ENCODE measurements at regions of chr1 and their contacts with region 1.

Region 1: GRCh38 chr1:226121587-226122400 is 59.3 kb downstream of the H3-3A start:
- DNase-seq: peak; percentile 44 to 86 (median 75)
- ATAC-seq: peak; percentile 59
- H3K4me3 ChIP-seq: peak overlapping the region; percentile 48 to 61
- H3K4me3 Mint-ChIP-seq: peak overlapping the region; percentile 83
- H3K27ac ChIP-seq: peak overlapping the region; percentile 57 to 70
- H3K27ac Mint-ChIP-seq: peak overlapping the region; percentile 71
- H3K4me1 ChIP-seq: peaks cover 23% of the 10 kb centered on the region
- H3K4me1 Mint-ChIP-seq: peaks cover 26% of the 10 kb centered on the region
- H3K27me3 ChIP-seq: no peaks in the 10 kb centered on the region
- H3K27me3 Mint-ChIP-seq: no peaks in the 10 kb centered on the region
- CTCF ChIP-seq: peak; percentile 82

Region 2: GRCh38 chr1:225474986-225475820 is 646.6 kb before region 1 on chr1:
- CTCF ChIA-PET with region 1: interaction called, 6 read pairs
- POLR2A ChIA-PET with region 1: no interaction called
- intact Hi-C with region 1: loop called (anchors 2 to 5 kb)
- DNase-seq: peak; percentile 44 to 90 (median 70)
- ATAC-seq: peak; percentile 86
- H3K4me3 ChIP-seq: no peak overlapping the region
- H3K4me3 Mint-ChIP-seq: no peak overlapping the region
- H3K27ac ChIP-seq: no peak overlapping the region
- H3K27ac Mint-ChIP-seq: no peak overlapping the region
- H3K4me1 ChIP-seq: peaks cover 53% of the 10 kb centered on the region
- H3K4me1 Mint-ChIP-seq: peaks cover 48% of the 10 kb centered on the region
- H3K27me3 ChIP-seq: no peaks in the 10 kb centered on the region
- H3K27me3 Mint-ChIP-seq: no peaks in the 10 kb centered on the region
- CTCF ChIP-seq: peak; percentile 100

Region 3: DNA sequence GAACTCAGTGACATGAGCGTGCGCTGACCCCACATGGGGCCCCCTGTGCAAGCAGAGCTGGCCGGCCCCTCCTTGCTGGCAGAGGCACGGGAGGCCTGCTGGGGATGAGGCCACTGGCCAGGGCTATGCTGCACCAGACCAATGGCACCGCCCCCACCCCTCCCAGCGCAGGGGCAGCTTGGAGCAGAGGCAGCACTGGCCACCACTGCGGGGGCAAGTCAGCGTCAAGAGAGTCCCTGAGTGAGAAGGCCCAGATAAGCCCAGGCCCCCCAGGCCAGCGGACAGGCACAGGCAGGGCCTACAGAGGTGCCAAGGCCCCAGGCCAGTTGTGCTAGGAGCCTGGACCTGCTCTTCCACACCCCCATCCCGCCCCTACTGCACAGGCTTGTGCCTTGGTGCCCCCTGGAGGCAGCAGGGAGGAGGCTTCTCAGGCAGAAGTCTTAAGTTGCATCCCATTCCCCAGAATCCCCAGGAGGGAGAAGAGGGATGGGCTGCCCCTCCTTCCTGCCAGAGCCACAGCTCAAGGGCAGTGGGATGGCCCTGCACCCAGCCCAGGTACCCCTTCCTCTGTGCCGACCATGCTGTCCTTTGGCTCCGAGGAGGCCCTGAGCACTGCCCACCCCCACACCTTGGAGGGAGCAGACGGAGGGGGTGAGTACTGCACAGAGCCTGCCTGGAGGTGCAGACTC is 276.1 kb before region 1 on chr1:
- CTCF ChIA-PET with region 1: no interaction called
- POLR2A ChIA-PET with region 1: no interaction called
- intact Hi-C with region 1: no loop called
- DNase-seq: peak in 5 of 9 experiments; percentile 27 to 51 (median 39)
- ATAC-seq: no peak
- H3K4me3 ChIP-seq: no peak overlapping the region
- H3K4me3 Mint-ChIP-seq: no peak overlapping the region
- H3K27ac ChIP-seq: no peak overlapping the region
- H3K27ac Mint-ChIP-seq: peak overlapping the region; percentile 52
- H3K4me1 ChIP-seq: peaks cover 54% of the 10 kb centered on the region
- H3K4me1 Mint-ChIP-seq: peaks cover 64% of the 10 kb centered on the region
- H3K27me3 ChIP-seq: no peaks in the 10 kb centered on the region
- H3K27me3 Mint-ChIP-seq: no peaks in the 10 kb centered on the region
- CTCF ChIP-seq: peak; percentile 16

Region 4: DNA sequence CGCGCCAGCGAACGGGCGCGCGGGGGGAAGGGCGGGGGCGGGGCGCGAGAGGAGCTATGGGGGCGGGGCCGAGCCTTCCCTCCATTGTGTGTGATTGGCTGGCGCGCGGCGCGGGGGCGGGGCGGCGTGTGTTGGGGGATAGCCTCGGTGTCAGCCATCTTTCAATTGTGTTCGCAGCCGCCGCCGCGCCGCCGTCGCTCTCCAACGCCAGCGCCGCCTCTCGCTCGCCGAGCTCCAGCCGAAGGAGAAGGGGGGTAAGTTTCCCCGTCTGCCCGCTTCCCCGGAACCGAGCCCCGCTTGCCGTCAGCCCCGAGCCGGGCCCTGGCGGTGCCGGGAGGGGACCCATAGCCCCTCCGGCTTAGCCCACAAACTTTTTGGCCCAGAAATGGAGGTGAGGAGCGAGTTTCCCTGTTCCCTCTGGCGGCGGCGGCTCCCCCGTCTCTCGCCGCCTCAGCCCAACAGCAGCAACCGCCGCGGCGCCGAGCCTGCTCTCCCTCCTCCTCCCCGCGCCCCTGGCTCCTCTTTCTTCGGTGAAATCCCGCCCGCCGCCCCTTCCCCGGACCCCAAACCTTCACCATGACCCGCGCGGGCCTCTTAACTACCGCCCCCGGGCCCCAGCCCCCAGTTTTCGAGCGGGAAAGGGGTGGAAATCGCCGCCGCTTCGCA is 59.1 kb before region 1 on chr1 and contains the start of gene H3-3A:
- CTCF ChIA-PET with region 1: interaction called, 61 read pairs
- POLR2A ChIA-PET with region 1: interaction called, 18 read pairs
- intact Hi-C with region 1: loop called (anchors 1 kb)
- DNase-seq: peak; percentile 96 to 99 (median 98)
- ATAC-seq: peak; percentile 85
- H3K4me3 ChIP-seq: peak within 1 kb of the TSS; percentile 84 to 92
- H3K4me3 Mint-ChIP-seq: peak within 1 kb of the TSS; percentile 100
- H3K27ac ChIP-seq: peak within 1 kb of the TSS; percentile 90 to 91
- H3K27ac Mint-ChIP-seq: peak within 1 kb of the TSS; percentile 100
- H3K4me1 ChIP-seq: peaks cover 42% of the 10 kb centered on the region
- H3K4me1 Mint-ChIP-seq: peaks cover 49% of the 10 kb centered on the region
- H3K27me3 ChIP-seq: no peaks in the 10 kb centered on the region
- H3K27me3 Mint-ChIP-seq: no peaks in the 10 kb centered on the region
- CTCF ChIP-seq: no peak
- total RNA-seq, gene H3-3A: 439 to 447 TPM

Region 5: DNA sequence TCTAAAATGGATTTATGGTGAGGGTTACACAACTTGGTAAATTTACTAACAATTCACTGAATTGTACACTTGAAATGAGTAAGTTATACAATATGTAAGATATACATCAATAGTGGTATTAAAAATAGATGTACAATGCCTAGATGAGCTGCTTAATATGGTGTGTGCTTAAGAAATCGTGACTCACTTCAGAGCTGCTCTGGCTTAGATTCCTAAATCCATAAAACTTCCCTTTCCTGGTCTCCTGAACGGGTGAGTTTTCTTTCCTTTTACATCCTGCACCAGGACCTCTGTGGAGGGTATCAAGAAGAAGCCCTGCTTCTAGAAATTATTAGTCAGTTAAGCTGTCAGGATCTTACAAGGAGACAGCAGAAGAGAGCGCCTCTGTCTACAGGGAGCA is 28.8 kb before region 1 on chr1:
- CTCF ChIA-PET with region 1: interaction called, 13 read pairs
- POLR2A ChIA-PET with region 1: no interaction called
- intact Hi-C with region 1: no loop called
- DNase-seq: no peak
- ATAC-seq: no peak
- H3K4me3 ChIP-seq: no peak overlapping the region
- H3K4me3 Mint-ChIP-seq: no peak overlapping the region
- H3K27ac ChIP-seq: no peak overlapping the region
- H3K27ac Mint-ChIP-seq: no peak overlapping the region
- H3K4me1 ChIP-seq: no peaks in the 10 kb centered on the region
- H3K4me1 Mint-ChIP-seq: no peaks in the 10 kb centered on the region
- H3K27me3 ChIP-seq: peaks cover 0 to 3% of the 10 kb centered on the region in 2 experiments
- H3K27me3 Mint-ChIP-seq: peaks cover 3% of the 10 kb centered on the region
- CTCF ChIP-seq: no peak

Region 6: GRCh38 chr1:226135709-226136108 is 13.9 kb after region 1 on chr1:
- CTCF ChIA-PET with region 1: interaction called, 12 read pairs
- POLR2A ChIA-PET with region 1: no interaction called
- intact Hi-C with region 1: no loop called
- DNase-seq: peak in 1 of 9 experiments; percentile 35
- ATAC-seq: no peak
- H3K4me3 ChIP-seq: no peak overlapping the region
- H3K4me3 Mint-ChIP-seq: no peak overlapping the region
- H3K27ac ChIP-seq: no peak overlapping the region
- H3K27ac Mint-ChIP-seq: no peak overlapping the region
- H3K4me1 ChIP-seq: no peaks in the 10 kb centered on the region
- H3K4me1 Mint-ChIP-seq: no peaks in the 10 kb centered on the region
- H3K27me3 ChIP-seq: no peaks in the 10 kb centered on the region
- H3K27me3 Mint-ChIP-seq: no peaks in the 10 kb centered on the region
- CTCF ChIP-seq: no peak

Region 7: DNA sequence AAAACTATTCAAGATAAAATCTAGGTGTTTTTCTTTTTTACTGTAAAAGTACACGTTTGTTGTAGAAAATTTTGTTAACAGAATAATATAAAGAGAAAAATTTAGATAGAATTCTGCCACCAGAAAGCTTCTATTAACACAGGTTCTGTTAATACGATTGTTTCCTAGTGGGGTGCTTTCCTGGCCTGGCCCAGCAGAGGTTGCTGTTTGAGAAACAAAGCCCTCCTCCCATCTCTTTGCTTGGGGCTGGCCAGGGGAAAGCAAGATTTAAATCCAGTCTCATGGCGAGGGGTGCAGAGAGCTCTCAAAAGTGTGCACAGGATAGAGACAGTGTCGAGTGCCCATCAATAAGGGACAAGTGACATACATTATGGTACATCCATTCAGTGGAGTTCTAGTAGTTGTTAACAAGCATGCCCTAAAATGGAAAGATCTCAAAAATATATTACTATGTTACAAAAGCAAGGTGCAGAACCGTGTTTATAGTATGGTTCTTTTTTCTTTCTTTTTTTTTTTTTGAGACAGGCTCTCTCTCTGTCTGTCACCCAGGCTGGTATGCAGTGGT is 79.3 kb after region 1 on chr1:
- CTCF ChIA-PET with region 1: interaction called, 190 read pairs
- POLR2A ChIA-PET with region 1: interaction called, 4 read pairs
- intact Hi-C with region 1: loop called (anchors 1 kb)
- DNase-seq: no peak
- ATAC-seq: no peak
- H3K4me3 ChIP-seq: no peak overlapping the region
- H3K4me3 Mint-ChIP-seq: no peak overlapping the region
- H3K27ac ChIP-seq: no peak overlapping the region
- H3K27ac Mint-ChIP-seq: no peak overlapping the region
- H3K4me1 ChIP-seq: no peaks in the 10 kb centered on the region
- H3K4me1 Mint-ChIP-seq: no peaks in the 10 kb centered on the region
- H3K27me3 ChIP-seq: no peaks in the 10 kb centered on the region
- H3K27me3 Mint-ChIP-seq: peaks cover 12% of the 10 kb centered on the region
- CTCF ChIP-seq: no peak